ENCODE measurements at regions of chr17 and their contacts with region 1.

Region 1: DNA sequence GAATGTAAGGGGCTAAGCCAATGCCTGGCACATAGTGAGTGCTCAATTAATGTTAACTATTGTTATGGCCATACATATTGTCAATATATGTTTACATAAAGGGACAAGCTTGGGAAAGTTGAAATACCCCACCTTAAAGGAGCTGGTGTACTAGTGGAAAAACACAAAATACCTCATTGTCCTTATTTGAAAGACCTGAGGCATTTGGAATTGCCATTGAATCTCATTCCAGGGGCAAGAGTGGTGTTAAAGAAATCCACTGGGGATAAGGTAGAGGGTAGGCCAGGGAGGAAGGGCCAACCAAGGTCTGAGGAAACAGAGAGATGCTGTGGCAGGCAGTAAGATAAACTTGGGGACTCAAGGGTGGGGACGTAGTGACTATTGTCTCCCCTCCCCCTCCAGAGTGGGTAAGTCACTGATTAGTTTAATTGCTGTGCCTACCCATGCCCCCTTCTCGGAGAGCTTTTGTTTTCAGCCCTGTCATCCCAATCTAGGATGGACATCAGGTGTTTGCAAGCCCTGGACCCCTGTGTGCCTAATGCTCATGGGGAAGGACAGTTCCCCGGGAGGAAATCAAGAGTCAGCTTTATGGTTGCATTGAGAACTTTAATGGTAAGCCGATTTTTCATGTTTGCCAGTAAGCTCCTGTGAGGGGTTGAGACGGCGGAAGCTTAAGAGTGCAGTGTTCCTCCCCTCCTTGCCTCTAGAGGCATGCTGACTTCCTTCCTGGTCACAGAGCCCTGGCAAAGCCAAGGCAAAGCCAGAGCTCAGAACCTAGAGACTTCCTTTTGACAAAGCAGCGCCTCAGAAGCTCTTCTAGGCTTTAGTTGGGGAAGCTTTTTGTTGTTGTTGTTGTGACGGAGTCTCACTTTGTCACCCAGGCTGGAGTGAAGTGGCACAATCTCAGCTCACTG is 2.5 kb upstream of the HEATR9 start:
- DNase-seq: peak in 6 of 9 experiments; percentile 27 to 71 (median 50)
- ATAC-seq: peak; percentile 86
- H3K4me3 ChIP-seq: no peak overlapping the region
- H3K4me3 Mint-ChIP-seq: peak overlapping the region; percentile 37
- H3K27ac ChIP-seq: no peak overlapping the region
- H3K27ac Mint-ChIP-seq: peak overlapping the region; percentile 60
- H3K4me1 ChIP-seq: peaks cover 21% of the 10 kb centered on the region
- H3K4me1 Mint-ChIP-seq: peaks cover 49% of the 10 kb centered on the region
- H3K27me3 ChIP-seq: no peaks in the 10 kb centered on the region
- H3K27me3 Mint-ChIP-seq: no peaks in the 10 kb centered on the region
- CTCF ChIP-seq: no peak

Region 2: DNA sequence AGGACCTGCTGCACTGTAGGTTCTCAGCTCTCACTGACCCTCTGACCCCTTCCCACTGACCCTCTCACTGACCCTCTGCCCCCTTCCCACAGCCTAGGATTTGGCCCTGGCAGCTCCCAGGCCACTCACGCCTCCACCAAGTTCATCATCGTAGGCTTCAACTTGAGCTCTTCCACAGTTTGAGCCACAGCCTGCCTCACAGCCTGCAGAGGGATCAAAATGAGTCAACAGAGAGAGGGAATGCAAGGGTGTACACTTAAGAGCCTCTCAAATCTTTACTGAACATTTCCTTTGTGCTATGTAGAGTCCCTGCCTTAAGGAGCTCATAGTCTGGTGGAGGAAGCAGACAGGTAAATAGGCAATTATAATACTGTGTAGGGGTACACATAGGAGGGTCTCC is 14.6 kb before region 1 on chr17:
- CTCF ChIA-PET with region 1: interaction called, 5 read pairs
- POLR2A ChIA-PET with region 1: interaction called, 18 read pairs
- intact Hi-C with region 1: no loop called
- DNase-seq: no peak
- ATAC-seq: no peak
- H3K4me3 ChIP-seq: no peak overlapping the region
- H3K4me3 Mint-ChIP-seq: no peak overlapping the region
- H3K27ac ChIP-seq: no peak overlapping the region
- H3K27ac Mint-ChIP-seq: peak overlapping the region; percentile 66
- H3K4me1 ChIP-seq: no peaks in the 10 kb centered on the region
- H3K4me1 Mint-ChIP-seq: peaks cover 11% of the 10 kb centered on the region
- H3K27me3 ChIP-seq: no peaks in the 10 kb centered on the region
- H3K27me3 Mint-ChIP-seq: no peaks in the 10 kb centered on the region
- CTCF ChIP-seq: no peak

Region 3: DNA sequence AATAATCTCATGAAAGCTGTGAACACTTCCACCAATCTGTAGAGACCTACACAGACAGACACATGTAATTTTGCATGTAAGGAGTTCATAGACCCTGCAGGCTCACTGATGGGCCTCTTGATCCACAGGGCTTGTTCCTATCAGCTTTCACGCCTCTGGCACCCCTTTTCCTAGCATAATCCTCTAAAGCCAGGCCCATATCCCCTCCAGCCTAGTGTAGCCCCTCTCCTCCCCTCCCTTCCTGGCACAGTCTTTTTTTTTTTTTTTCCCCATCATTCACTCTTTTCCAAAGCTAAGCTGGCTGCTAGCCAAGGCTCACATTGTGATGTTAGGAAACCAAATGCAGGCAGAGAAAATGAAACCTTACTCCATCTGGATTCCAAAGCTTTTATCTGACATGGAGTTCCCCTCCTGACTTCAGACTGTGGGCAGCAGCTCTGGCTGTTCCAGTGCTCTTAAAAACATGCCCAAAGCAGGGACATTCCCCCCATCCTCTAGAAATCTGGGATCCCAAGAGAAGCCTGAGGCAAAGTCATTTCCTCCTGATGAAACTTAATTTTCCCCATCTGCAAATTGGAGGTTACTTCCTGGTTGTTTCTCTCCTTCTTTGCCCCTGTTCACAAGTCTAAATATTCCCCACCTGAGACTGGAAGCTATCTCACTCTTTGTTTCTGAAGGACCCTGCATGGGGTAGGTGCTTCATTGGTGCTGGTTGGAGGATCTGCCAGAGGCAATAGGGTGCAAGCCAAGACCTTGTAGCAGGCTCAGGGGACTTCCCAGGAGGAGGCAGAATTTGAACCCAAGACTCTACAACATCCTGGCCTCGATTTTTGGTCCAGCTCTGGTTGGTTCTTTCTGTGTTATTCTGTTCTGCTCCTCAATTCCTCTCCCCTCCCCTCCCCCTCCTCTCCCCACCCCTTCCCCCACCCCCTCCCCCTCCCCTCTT is 18.9 kb after region 1 on chr17:
- CTCF ChIA-PET with region 1: interaction called, 12 read pairs
- POLR2A ChIA-PET with region 1: interaction called, 98 read pairs
- intact Hi-C with region 1: loop called in 1 of 2 experiments (anchors 2 kb)
- DNase-seq: peak in 2 of 9 experiments; percentile 51 to 73
- ATAC-seq: peak; percentile 30
- H3K4me3 ChIP-seq: no peak overlapping the region
- H3K4me3 Mint-ChIP-seq: peak overlapping the region; percentile 49
- H3K27ac ChIP-seq: peak overlapping the region in 1 of 2 experiments; percentile 72
- H3K27ac Mint-ChIP-seq: peak overlapping the region; percentile 91
- H3K4me1 ChIP-seq: peaks cover 44% of the 10 kb centered on the region
- H3K4me1 Mint-ChIP-seq: peaks cover 57% of the 10 kb centered on the region
- H3K27me3 ChIP-seq: no peaks in the 10 kb centered on the region
- H3K27me3 Mint-ChIP-seq: no peaks in the 10 kb centered on the region
- CTCF ChIP-seq: no peak

Region 4: GRCh38 chr17:35898283-35899070 is 27.3 kb after region 1 on chr17:
- CTCF ChIA-PET with region 1: interaction called, 3 read pairs
- POLR2A ChIA-PET with region 1: interaction called, 98 read pairs
- intact Hi-C with region 1: no loop called
- DNase-seq: peak in 5 of 9 experiments; percentile 46 to 75 (median 68)
- ATAC-seq: peak; percentile 51
- H3K4me3 ChIP-seq: peak overlapping the region in 1 of 2 experiments; percentile 12
- H3K4me3 Mint-ChIP-seq: peak overlapping the region; percentile 27
- H3K27ac ChIP-seq: peak overlapping the region; percentile 5 to 81
- H3K27ac Mint-ChIP-seq: peak overlapping the region; percentile 91
- H3K4me1 ChIP-seq: peaks cover 49% of the 10 kb centered on the region
- H3K4me1 Mint-ChIP-seq: peaks cover 65% of the 10 kb centered on the region
- H3K27me3 ChIP-seq: no peaks in the 10 kb centered on the region
- H3K27me3 Mint-ChIP-seq: no peaks in the 10 kb centered on the region
- CTCF ChIP-seq: no peak

Region 5: DNA sequence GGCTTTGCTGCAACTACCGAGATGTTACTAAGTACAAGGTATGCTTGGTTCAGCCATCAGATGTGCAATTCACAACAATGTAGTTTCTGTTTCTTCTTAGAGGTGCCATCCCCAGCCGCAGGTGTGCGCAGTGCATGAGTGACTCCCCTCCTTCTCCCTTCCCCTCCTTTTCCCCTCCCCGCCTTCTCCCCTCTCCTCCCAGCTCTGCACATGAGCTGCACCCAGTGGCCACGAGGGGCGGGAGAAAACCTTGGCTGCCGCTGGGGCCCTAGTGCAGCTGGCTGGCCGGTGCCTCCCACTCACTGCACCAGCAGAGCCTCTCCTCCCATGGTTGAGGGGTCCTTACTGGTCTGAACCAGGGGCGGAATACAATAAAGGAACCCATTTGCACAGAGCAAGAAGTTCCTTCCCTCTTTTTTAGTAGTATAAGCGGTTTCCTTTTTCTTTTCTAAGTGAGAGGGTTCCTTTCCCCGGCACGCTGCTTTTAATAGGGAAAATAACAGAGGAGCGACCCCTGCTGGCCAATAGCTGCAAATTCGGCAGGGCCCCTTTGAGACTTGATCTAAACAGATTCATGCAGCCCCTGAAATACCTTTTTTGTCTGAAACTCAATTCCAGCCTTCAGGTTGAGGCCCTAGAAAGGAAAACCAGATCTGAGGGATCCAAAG is 138.0 kb after region 1 on chr17:
- CTCF ChIA-PET with region 1: no interaction called
- POLR2A ChIA-PET with region 1: no interaction called
- intact Hi-C with region 1: no loop called
- DNase-seq: no peak
- ATAC-seq: no peak
- H3K4me3 ChIP-seq: no peak overlapping the region
- H3K4me3 Mint-ChIP-seq: no peak overlapping the region
- H3K27ac ChIP-seq: no peak overlapping the region
- H3K27ac Mint-ChIP-seq: no peak overlapping the region
- H3K4me1 ChIP-seq: no peaks in the 10 kb centered on the region
- H3K4me1 Mint-ChIP-seq: peaks cover 8% of the 10 kb centered on the region
- H3K27me3 ChIP-seq: no peaks in the 10 kb centered on the region
- H3K27me3 Mint-ChIP-seq: no peaks in the 10 kb centered on the region
- CTCF ChIP-seq: no peak

Region 6: DNA sequence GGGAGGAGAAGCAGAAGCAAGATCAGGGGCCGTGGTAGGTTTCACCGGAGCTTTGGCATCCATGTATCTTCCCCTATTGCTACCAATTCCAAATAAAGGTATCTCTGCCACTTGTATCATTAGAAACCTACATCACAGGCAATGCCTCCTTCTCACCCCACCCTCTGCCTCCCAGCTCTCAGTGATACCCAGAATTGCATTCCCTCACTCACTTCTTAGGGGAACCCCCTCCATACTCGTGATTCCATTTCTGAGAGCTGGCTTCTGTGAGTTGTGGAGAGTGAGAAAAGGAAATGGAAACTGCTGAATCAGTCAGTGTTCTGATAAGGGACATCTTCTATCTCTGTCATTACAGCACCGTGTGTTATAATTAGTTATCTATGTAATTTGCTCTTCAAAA is 221.1 kb after region 1 on chr17:
- CTCF ChIA-PET with region 1: no interaction called
- POLR2A ChIA-PET with region 1: no interaction called
- intact Hi-C with region 1: no loop called
- DNase-seq: peak in 2 of 9 experiments; percentile 42 to 65
- ATAC-seq: no peak
- H3K4me3 ChIP-seq: no peak overlapping the region
- H3K4me3 Mint-ChIP-seq: no peak overlapping the region
- H3K27ac ChIP-seq: peak overlapping the region in 1 of 2 experiments; percentile 48
- H3K27ac Mint-ChIP-seq: no peak overlapping the region
- H3K4me1 ChIP-seq: peaks cover 5% of the 10 kb centered on the region
- H3K4me1 Mint-ChIP-seq: peaks cover 40% of the 10 kb centered on the region
- H3K27me3 ChIP-seq: no peaks in the 10 kb centered on the region
- H3K27me3 Mint-ChIP-seq: peaks cover 9% of the 10 kb centered on the region
- CTCF ChIP-seq: no peak

Measured in CD8-positive, alpha-beta T cell (primary cell).